Activated T-helper 1 cell treated with anti-CD3 and anti-CD28 coated beads, Interleukin-12 subunit alpha, Interleukin-12 subunit beta, Interleukin-2, Interleukin-4 antibody, amounts not matched to agents 30 ng/mL and 10 ng/mL and 1 ng/mL, durations not matched to agents 14 hours and 24 hours and 36 hours (primary cell): ENCODE measurements at regions of chr12 and their contacts with region 1.

Region 1: GRCh38 chr12:49740930-49741881 is at the start of gene TMBIM6:
- DNase-seq: peak; percentile 99
- H3K4me3 Mint-ChIP-seq: peak within 1 kb of the TSS; percentile 86
- H3K27ac Mint-ChIP-seq: peak within 1 kb of the TSS; percentile 94
- H3K4me1 Mint-ChIP-seq: peaks cover 30% of the 10 kb centered on the region
- H3K27me3 Mint-ChIP-seq: peaks cover 4% of the 10 kb centered on the region
- total RNA-seq, gene TMBIM6: 382 and 393 TPM in 2 replicates

Region 2: GRCh38 chr12:49130151-49131050 is 610.8 kb before region 1 on chr12:
- intact Hi-C with region 1: loop called (anchors 1 kb)
- DNase-seq: peak; percentile 92
- H3K4me3 Mint-ChIP-seq: peak overlapping the region; percentile 98
- H3K27ac Mint-ChIP-seq: peak overlapping the region; percentile 93
- H3K4me1 Mint-ChIP-seq: peaks cover 59% of the 10 kb centered on the region
- H3K27me3 Mint-ChIP-seq: no peaks in the 10 kb centered on the region

Region 3: DNA sequence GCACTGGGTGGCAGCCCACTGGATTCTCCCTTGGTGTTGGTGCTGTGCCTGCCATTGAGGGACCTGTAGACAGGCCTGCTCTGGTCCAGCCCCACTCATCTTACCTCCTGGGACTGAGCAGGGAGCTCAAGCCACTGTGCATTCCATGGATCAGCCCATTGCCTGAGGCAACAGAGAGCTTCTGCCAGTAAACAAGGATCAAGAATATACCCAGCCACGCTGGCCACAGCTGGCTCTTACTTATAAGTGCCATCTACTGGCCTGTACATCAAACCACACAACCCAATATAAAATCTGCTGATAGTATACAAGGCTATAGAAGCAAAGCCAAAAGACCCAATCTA is 131.5 kb before region 1 on chr12:
- intact Hi-C with region 1: no loop called
- DNase-seq: no peak
- H3K4me3 Mint-ChIP-seq: no peak overlapping the region
- H3K27ac Mint-ChIP-seq: no peak overlapping the region
- H3K4me1 Mint-ChIP-seq: no peaks in the 10 kb centered on the region
- H3K27me3 Mint-ChIP-seq: peaks cover 2% of the 10 kb centered on the region

Region 4: GRCh38 chr12:49623142-49623904 is 117.9 kb before region 1 on chr12 and contains the start of gene PRPF40B:
- intact Hi-C with region 1: loop called (anchors 1 kb)
- DNase-seq: peak; percentile 81
- H3K4me3 Mint-ChIP-seq: peak within 1 kb of the TSS; percentile 83
- H3K27ac Mint-ChIP-seq: peak within 1 kb of the TSS; percentile 81
- H3K4me1 Mint-ChIP-seq: peaks cover 26% of the 10 kb centered on the region
- H3K27me3 Mint-ChIP-seq: peaks cover 18% of the 10 kb centered on the region
- total RNA-seq, gene PRPF40B: 10.4 and 12.7 TPM in 2 replicates

Region 5: GRCh38 chr12:49698619-49699545 is 42.3 kb before region 1 on chr12:
- intact Hi-C with region 1: loop called (anchors 2 kb)
- DNase-seq: peak; percentile 21
- H3K4me3 Mint-ChIP-seq: peak overlapping the region; percentile 67
- H3K27ac Mint-ChIP-seq: peak overlapping the region; percentile 83
- H3K4me1 Mint-ChIP-seq: peaks cover 61% of the 10 kb centered on the region
- H3K27me3 Mint-ChIP-seq: peaks cover 2% of the 10 kb centered on the region

Region 6: DNA sequence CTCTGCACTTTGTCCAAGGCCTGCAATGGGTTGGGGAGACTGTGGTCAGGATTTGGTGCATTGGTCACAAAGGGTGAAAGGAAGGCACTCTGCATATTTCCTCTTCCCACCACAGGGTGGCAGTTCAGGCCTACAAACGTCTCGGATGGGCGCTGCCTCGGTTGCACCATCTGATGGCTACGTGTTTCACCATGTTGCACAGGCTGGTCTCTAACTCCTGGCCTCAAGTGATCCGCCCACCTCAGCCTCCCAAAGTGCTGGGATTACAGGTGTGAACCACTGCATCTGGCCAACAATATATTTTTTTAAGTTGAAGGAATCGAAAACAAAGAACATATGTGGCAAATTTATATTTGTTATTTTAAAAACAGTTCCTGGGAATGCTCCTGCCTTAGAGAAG is 35.2 kb after region 1 on chr12:
- intact Hi-C with region 1: loop called (anchors 1 kb)
- DNase-seq: peak; percentile 37
- H3K4me3 Mint-ChIP-seq: no peak overlapping the region
- H3K27ac Mint-ChIP-seq: no peak overlapping the region
- H3K4me1 Mint-ChIP-seq: peaks cover 19% of the 10 kb centered on the region
- H3K27me3 Mint-ChIP-seq: peaks cover 18% of the 10 kb centered on the region

Region 7: DNA sequence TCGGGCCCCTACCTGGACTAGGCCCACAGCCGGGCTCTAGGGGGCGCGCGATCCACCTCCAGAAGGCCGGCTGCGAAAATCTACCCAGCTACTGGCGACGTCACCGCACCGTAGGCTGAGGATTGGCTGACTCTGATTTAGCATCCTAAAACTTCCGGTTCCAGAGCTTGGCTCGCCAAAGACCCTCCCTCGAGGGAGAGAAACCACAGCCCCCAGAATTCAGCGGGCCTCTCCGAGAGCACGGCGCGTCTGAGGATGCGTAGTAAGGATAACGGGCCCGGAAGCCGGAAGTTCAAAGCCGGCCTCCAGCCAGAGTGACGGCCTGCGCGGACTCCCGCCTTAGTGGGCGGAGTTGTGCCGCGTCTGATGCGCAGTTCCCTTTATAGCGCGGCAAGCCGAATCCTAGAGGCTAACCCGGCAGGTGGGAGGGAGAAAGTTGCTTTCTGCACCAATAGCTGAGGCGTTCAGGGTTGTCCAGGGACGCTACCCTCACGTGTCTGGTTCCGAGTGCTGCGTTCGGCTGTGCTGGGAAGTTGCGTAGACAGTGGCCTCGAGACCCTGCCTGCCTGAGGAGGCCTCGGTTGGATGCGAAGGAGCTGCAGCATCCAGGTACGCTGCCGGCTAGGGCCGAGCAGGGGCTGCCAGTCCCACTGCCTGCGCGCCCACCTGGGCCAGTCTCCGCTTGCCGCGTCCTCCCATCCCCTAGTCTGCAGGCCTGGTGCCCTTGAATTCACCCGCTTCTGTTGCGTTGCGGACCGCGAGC is 370.7 kb after region 1 on chr12 and contains the start of gene COX14:
- intact Hi-C with region 1: loop called (anchors 1 kb)
- DNase-seq: peak; percentile 98
- H3K4me3 Mint-ChIP-seq: peak within 1 kb of the TSS; percentile 94
- H3K27ac Mint-ChIP-seq: peak within 1 kb of the TSS; percentile 94
- H3K4me1 Mint-ChIP-seq: peaks cover 42% of the 10 kb centered on the region
- H3K27me3 Mint-ChIP-seq: no peaks in the 10 kb centered on the region
- total RNA-seq, gene COX14: 44.3 and 45.6 TPM in 2 replicates